Left colon (tissue), 2 donors: ENCODE measurements at regions of chr7 and their contacts with region 1.

Region 1: DNA sequence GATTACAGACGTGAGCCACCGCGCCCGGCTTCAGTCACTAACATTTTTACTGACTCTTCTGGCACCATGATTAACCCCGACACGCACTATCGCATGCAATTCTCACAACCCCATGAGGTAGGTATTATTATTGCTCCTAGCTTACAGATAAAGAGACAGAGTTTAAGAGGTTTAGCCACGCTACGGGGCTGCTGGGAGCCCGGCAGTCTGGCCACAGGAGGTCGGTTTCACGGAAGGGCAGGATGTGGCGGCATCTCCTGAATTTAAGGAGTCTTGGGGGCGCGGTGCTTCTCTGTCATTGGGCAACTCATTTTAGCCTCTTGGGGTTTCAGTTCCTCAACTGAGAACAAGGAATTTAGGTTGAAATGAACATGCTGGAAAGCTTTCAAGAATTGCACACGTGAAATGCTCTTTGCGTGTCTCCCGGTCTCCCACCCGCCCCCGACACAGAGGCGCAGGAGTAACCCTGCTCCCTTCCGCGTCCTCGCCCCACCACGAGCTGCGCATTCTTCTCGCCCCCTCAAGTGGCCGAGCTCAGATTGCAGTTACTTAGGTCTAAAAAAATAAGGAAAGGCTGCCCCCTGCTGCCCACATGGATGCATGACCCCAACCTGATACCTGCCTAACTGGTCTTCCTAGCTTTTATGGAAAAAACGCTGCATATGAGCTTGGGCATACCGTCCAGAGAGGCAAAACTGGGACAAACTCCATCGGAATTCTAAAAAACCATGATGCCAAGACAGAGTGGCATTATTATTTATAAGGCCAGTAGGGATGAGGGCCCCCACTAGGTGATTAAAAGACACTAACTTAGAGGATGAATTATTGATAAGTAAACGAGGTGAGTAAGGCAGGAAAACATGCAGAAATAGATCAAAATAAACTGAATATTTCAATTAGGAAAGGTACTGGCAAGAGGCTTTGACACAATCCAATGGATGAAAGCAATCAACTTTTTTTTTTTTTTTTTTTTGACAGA is 12.4 kb downstream of the PRSS2 start:
- DNase-seq: peak; percentile 76 to 94
- ATAC-seq: peak; percentile 97

Region 2: GRCh38 chr7:142603870-142604448 is 179.3 kb before region 1 on chr7:
- intact Hi-C with region 1: loop called in 1 of 2 experiments (anchors 10 kb)
- DNase-seq: peak in 1 of 2 donors; percentile 40
- ATAC-seq: peak; percentile 27

Region 3: GRCh38 chr7:142632291-142633134 is 150.7 kb before region 1 on chr7:
- intact Hi-C with region 1: loop called in 1 of 2 experiments (anchors 10 kb)
- DNase-seq: peak in 1 of 2 donors; percentile 55
- ATAC-seq: peak; percentile 84

Region 4: DNA sequence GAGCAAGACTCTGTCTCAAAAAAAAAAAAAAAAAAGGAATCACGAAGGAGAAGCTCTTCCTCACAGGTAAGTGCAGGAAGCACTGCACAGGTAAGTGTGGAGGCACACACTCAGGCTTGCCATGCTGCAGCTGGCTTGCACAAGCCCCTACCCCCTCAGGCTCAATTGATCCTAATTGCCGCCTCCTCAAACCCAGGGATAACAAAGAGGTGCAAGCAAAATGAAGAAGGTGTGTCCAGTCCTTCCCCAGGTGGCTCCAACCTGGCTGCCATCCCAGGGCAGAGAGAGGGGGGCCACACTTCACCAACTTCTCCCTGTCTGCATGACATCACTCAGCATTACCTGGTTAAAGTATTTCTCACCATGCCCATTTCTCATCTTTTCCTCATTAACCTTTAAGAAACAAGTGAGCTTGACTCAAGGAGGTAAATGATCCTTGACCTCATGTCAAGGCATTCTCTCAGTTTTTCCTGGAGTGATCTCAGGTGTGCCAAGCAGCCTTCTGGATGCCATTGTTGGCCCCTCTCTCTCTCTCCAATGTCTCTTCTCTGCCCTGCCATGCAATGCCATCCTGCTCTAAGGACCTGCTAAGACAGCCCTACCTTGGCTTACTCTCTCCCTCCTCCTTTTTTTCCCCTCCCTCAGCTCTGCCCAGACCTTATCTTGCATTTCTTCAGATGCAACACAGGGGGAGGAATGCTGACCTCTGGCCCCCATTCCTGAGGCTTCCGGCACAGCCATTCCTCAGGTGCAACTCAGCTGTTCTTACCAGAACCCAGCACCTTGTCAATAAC is 115.4 kb after region 1 on chr7:
- intact Hi-C with region 1: no loop called
- DNase-seq: no peak
- ATAC-seq: peak; percentile 21